ENCODE measurements at regions of chr15 and their contacts with region 1.

Region 1: GRCh38 chr15:67833710-67834511 is 5.9 kb downstream of the RNU6-1 start:
- DNase-seq: peak; percentile 59
- H3K4me3 Mint-ChIP-seq: peak overlapping the region; percentile 39
- H3K27ac Mint-ChIP-seq: no peak overlapping the region
- H3K4me1 Mint-ChIP-seq: peaks cover 49% of the 10 kb centered on the region
- H3K27me3 Mint-ChIP-seq: peaks cover 68% of the 10 kb centered on the region

Region 2: DNA sequence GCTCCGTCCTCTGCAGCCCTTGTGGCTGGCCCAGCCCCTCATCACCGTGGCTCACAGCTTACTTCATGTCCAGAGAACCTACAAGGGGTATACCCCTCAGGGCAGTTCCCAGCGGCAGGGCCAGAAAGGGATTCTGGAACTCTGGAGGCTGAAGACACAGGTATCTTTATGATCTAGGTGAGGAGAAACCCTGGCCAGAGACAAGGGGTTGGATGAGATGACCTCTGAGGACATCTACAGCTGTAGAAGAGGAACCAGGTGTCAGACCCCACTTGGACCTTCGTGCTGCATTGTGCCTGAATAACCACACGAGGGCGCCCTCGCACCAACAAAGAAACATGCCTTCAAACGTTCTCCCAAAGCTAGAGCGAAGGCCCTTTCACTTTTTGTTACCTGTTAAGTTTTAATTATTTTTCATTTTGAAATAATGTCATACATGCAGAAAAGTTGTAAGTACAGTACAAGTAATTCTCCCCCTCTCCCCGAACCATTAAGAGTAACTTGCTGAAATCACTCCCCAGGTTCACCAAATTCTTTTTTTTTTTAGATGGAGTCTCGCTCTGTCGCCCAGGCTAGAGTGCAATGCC is 887.2 kb before region 1 on chr15:
- CTCF ChIA-PET with region 1: interaction called, 3 read pairs
- POLR2A ChIA-PET with region 1: no interaction called
- intact Hi-C with region 1: loop called (anchors 2 kb)
- DNase-seq: peak; percentile 83
- H3K4me3 Mint-ChIP-seq: no peak overlapping the region
- H3K27ac Mint-ChIP-seq: no peak overlapping the region
- H3K4me1 Mint-ChIP-seq: peaks cover 6% of the 10 kb centered on the region
- H3K27me3 Mint-ChIP-seq: no peaks in the 10 kb centered on the region

Region 3: GRCh38 chr15:67456677-67457529 is 377.0 kb before region 1 on chr15:
- CTCF ChIA-PET with region 1: interaction called, 104 read pairs
- POLR2A ChIA-PET with region 1: no interaction called
- intact Hi-C with region 1: loop called (anchors 1 kb)
- DNase-seq: peak; percentile 87
- H3K4me3 Mint-ChIP-seq: no peak overlapping the region
- H3K27ac Mint-ChIP-seq: no peak overlapping the region
- H3K4me1 Mint-ChIP-seq: peaks cover 2% of the 10 kb centered on the region
- H3K27me3 Mint-ChIP-seq: peaks cover 3% of the 10 kb centered on the region

Region 4: GRCh38 chr15:67501177-67501835 is 332.6 kb before region 1 on chr15:
- CTCF ChIA-PET with region 1: interaction called, 8 read pairs
- POLR2A ChIA-PET with region 1: no interaction called
- intact Hi-C with region 1: loop called (anchors 2 kb)
- DNase-seq: no peak
- H3K4me3 Mint-ChIP-seq: no peak overlapping the region
- H3K27ac Mint-ChIP-seq: no peak overlapping the region
- H3K4me1 Mint-ChIP-seq: no peaks in the 10 kb centered on the region
- H3K27me3 Mint-ChIP-seq: no peaks in the 10 kb centered on the region

Region 5: GRCh38 chr15:67515090-67515489 is 318.8 kb before region 1 on chr15:
- CTCF ChIA-PET with region 1: no interaction called
- POLR2A ChIA-PET with region 1: no interaction called
- intact Hi-C with region 1: no loop called
- DNase-seq: no peak
- H3K4me3 Mint-ChIP-seq: no peak overlapping the region
- H3K27ac Mint-ChIP-seq: no peak overlapping the region
- H3K4me1 Mint-ChIP-seq: peaks cover 2% of the 10 kb centered on the region
- H3K27me3 Mint-ChIP-seq: no peaks in the 10 kb centered on the region

Region 6: DNA sequence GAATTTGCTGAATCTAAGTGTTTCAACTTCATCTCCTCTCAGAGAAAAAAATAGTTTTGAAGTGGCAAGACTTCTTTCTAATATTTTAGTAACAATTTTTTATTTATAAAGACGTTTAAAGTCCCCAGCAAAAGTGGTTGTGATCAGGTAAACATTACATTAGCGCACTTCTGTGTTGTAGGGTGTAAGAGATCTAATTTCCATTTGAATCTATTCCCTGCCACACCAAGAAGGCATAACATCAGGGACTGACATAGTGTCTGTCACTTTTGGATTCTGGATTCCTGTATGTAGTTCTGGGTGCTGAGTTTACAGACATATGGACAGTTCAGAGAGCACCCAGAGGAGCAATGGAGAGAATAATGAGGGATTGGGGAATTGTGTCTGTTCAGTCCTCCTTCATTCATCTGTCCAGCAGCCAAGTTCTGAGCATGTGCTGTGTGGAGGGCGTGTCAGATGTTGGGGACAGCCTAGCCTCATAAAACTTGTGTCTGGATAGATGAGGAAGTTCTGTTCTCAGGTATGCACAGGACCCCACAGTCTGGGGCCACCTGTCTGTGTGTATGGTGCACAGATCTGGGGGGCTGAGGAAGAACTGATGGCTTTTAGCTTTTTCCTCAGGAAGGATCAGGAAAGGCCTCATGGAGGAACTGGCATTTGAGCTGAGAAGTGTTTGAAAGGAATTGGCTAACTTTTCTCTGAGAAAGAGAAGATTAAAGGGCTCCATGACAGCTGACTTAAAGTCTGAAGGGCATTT is 225.8 kb before region 1 on chr15:
- CTCF ChIA-PET with region 1: no interaction called
- POLR2A ChIA-PET with region 1: no interaction called
- intact Hi-C with region 1: no loop called
- DNase-seq: no peak
- H3K4me3 Mint-ChIP-seq: no peak overlapping the region
- H3K27ac Mint-ChIP-seq: no peak overlapping the region
- H3K4me1 Mint-ChIP-seq: no peaks in the 10 kb centered on the region
- H3K27me3 Mint-ChIP-seq: no peaks in the 10 kb centered on the region

Region 7: DNA sequence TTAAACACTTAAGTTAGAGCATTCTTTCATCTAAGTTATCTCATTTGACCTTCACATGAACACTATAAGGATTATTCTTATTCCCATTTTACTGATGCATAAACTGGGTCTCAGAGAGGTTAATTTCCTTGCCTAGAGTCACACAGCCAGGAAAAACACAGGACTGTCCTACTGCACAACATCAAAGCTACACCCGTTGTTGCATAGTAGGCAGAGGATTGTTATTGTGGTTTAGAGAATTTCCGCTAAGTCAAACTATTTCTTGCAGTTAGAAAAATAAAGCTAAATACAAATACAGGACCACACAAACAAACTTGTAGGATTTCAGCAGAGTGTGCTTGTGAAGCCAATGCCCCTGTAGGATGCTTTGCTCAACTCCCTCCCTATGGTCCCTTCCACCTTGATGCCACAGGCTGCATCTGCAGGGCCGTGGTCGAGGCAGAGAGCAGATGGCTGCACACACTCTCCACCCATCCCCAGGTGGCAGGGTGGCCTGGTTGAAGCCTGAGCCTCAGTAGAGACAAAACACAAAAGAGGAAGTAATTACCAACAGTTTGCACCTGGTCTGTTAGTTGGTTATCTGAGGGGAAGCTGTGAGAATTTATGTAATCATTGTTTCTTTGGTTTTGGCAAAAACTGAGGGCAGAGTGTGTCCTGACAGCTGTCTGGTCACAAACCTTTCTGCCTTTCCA is 49.7 kb before region 1 on chr15:
- CTCF ChIA-PET with region 1: interaction called, 4 read pairs
- POLR2A ChIA-PET with region 1: no interaction called
- intact Hi-C with region 1: loop called (anchors 5 kb)
- DNase-seq: no peak
- H3K4me3 Mint-ChIP-seq: no peak overlapping the region
- H3K27ac Mint-ChIP-seq: no peak overlapping the region
- H3K4me1 Mint-ChIP-seq: peaks cover 17% of the 10 kb centered on the region
- H3K27me3 Mint-ChIP-seq: no peaks in the 10 kb centered on the region